ENCODE measurements at regions of chr5 and their contacts with region 1.

Region 1: GRCh38 chr5:55982957-55983381 is 11.8 kb downstream of the IL6ST start:
- DNase-seq: no peak
- ATAC-seq: peak; percentile 42

Region 2: DNA sequence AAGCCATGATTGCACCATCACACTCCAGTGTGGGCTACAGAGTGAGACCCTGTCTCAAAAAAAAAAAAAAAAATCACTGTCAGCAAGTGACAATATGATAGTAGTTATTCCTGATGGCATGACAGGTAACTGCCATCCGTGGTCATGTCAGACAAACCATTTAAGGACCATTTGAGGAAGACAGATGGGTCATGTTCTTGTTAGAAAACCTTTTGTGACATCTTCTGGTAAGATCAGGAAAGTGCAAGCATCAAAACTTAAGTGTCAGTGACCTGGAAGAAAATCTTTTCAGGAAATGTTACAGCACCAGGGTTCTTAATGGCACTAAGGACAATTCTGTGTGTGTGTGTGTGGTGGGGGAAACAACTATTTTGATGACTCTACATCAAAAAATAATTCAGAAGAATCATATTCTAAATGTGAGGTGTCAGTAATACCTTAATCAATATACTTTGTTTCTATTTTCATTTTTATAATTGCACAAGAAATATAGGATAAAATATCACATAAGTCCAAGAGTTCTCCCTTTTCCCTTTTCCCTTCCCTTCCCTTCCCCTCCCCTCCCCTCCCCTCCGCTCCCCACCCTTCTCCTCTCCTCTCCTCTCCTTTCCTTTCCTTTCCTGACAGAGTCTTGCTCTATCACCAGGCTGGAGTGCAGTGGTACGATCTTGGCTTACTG is 288.7 kb before region 1 on chr5:
- intact Hi-C with region 1: no loop called
- DNase-seq: no peak
- ATAC-seq: peak; percentile 31

Region 3: DNA sequence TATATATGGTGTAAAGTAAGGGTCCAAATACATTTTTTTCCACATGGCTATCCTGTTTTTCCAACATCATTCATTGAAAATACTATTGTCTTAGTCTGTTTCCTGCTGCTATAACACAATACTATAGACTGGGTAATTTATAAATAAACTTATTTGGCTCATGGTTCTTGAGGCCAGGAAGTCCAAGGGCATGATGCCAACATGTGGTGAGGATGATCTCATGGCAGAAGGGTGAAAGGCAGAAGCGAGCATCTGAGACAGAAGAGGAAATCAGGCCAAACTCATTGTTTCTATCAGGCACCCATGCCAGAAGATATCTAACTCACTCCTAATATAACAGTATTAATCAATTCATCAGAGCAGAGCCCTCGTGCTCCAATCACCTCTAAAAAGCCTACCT is 207.5 kb after region 1 on chr5:
- intact Hi-C with region 1: loop called (anchors 10 kb)
- DNase-seq: no peak
- ATAC-seq: peak; percentile 34

Measured in Right ventricle myocardium superior (tissue), 1 donor.